ENCODE measurements at regions of chr7 and their contacts with region 1.

Region 1: GRCh38 chr7:134547397-134548054 is 1.4 kb upstream of the AKR1B15 start:
- DNase-seq: peak; percentile 83
- H3K4me3 Mint-ChIP-seq: peak overlapping the region; percentile 68
- H3K27ac Mint-ChIP-seq: peak overlapping the region; percentile 68
- H3K4me1 Mint-ChIP-seq: peaks cover 26% of the 10 kb centered on the region
- H3K27me3 Mint-ChIP-seq: no peaks in the 10 kb centered on the region
- CTCF ChIP-seq: peak; percentile 74

Region 2: DNA sequence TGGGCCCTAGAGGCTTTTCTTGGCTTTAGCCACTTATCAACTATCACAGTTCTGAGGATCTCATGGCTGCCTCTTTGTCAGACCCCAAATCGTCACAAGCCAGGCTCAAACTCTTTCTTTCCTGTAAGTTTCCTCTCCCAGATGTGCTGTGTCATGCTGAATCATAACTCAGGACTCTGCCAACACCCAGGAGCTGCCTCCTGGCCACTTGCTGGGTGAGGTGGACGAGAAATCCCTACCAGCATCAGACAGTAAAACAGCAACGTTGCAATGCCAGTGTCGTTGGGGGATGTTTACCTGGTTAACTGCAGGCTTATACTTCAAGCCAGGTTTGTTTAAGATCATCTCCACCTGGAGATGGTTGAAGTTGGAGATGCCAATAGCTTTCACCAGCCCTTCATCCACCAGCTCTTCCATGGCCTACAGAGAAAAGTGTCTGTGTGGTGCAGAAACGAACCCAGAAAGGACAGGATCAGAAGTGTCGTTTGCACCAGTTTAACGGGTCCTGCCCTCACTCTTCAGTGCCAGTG is 98.8 kb before region 1 on chr7:
- CTCF ChIA-PET with region 1: interaction called, 12 read pairs
- POLR2A ChIA-PET with region 1: no interaction called
- intact Hi-C with region 1: no loop called
- DNase-seq: peak; percentile 83
- H3K4me3 Mint-ChIP-seq: no peak overlapping the region
- H3K27ac Mint-ChIP-seq: peak overlapping the region; percentile 89
- H3K4me1 Mint-ChIP-seq: peaks cover 25% of the 10 kb centered on the region
- H3K27me3 Mint-ChIP-seq: no peaks in the 10 kb centered on the region
- CTCF ChIP-seq: no peak

Region 3: GRCh38 chr7:134520130-134520529 is 27.4 kb before region 1 on chr7:
- CTCF ChIA-PET with region 1: interaction called, 71 read pairs
- POLR2A ChIA-PET with region 1: interaction called, 17 read pairs
- intact Hi-C with region 1: loop called (anchors 1 kb)
- DNase-seq: peak; percentile 23
- H3K4me3 Mint-ChIP-seq: no peak overlapping the region
- H3K27ac Mint-ChIP-seq: no peak overlapping the region
- H3K4me1 Mint-ChIP-seq: peaks cover 26% of the 10 kb centered on the region
- H3K27me3 Mint-ChIP-seq: no peaks in the 10 kb centered on the region
- CTCF ChIP-seq: no peak

Region 4: DNA sequence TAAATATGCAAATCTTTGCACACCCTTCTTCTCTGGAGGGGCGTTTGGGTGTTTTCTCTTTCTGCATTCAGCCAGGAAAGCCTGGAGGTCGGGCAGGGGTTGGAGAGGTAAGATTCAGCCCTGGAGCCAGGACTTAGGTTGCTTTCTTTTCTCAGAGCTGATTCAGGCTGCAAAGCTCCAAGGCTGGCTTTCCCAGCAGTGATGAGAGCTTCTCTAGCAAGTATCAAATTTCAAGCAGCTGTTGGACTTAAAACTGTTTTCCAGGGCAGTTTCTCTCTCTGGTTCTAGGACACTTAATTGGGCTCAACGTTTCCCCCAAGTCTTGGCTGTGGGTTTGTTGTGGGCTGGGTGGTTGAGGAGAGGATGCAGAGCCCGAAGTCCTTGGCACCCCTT is 19.6 kb before region 1 on chr7:
- CTCF ChIA-PET with region 1: interaction called, 52 read pairs
- POLR2A ChIA-PET with region 1: interaction called, 24 read pairs
- intact Hi-C with region 1: no loop called
- DNase-seq: peak; percentile 66
- H3K4me3 Mint-ChIP-seq: no peak overlapping the region
- H3K27ac Mint-ChIP-seq: no peak overlapping the region
- H3K4me1 Mint-ChIP-seq: peaks cover 39% of the 10 kb centered on the region
- H3K27me3 Mint-ChIP-seq: no peaks in the 10 kb centered on the region
- CTCF ChIP-seq: no peak

Region 5: GRCh38 chr7:134533288-134533771 is 14.2 kb before region 1 on chr7:
- CTCF ChIA-PET with region 1: interaction called, 52 read pairs
- POLR2A ChIA-PET with region 1: interaction called, 24 read pairs
- intact Hi-C with region 1: no loop called
- DNase-seq: peak; percentile 54
- H3K4me3 Mint-ChIP-seq: peak overlapping the region; percentile 40
- H3K27ac Mint-ChIP-seq: peak overlapping the region; percentile 92
- H3K4me1 Mint-ChIP-seq: peaks cover 37% of the 10 kb centered on the region
- H3K27me3 Mint-ChIP-seq: no peaks in the 10 kb centered on the region
- CTCF ChIP-seq: no peak

Region 6: GRCh38 chr7:134605973-134606923 is 58.7 kb after region 1 on chr7:
- CTCF ChIA-PET with region 1: interaction called, 45 read pairs
- POLR2A ChIA-PET with region 1: interaction called, 4 read pairs
- intact Hi-C with region 1: loop called (anchors 1 kb)
- DNase-seq: peak; percentile 73
- H3K4me3 Mint-ChIP-seq: peak overlapping the region; percentile 21
- H3K27ac Mint-ChIP-seq: peak overlapping the region; percentile 65
- H3K4me1 Mint-ChIP-seq: peaks cover 6% of the 10 kb centered on the region
- H3K27me3 Mint-ChIP-seq: no peaks in the 10 kb centered on the region
- CTCF ChIP-seq: peak; percentile 90

Region 7: DNA sequence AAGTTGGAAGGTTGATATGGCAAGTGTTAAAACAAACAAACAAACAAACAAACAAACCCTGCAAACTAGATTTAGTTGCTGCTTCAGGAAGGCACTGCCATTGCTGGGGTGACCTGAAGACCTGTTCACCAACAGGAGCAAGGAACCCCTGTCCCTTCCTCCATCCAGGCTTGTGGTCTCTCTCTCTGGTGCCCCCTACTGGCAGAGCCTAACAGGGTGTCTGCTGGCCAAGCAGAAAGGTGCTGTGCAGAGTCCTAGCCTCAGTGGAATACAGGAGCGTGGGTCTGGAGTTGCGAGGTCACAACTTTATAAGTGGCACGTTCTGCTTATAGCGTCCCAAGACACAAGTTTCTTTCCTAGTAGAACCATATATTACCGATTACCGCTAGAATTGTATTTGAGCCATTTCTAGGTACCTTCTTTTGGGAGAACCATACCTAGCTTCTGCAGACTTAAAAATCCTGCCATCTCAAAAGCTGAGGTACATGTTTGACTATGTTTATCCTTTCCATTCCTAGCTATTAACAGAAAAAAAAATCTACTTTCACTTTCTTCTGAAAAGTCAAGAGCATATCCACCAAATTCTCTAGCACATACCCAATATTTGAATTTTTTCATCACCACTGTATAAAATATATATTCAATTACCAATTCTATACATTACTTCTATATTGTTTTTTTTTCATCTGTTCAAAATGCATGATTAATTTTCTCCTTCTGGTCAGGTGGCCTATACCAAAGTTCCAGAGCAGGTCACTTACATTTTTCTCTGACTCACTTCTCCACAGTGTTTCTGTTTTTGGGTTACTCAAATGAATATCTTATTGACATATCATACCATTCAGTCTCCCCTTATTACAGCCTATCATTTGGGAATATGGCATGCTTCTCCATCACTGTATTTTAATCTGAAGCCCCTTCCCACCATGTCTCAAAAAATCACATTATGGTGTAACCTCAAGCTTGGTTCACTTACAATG is 202.8 kb after region 1 on chr7:
- CTCF ChIA-PET with region 1: no interaction called
- POLR2A ChIA-PET with region 1: no interaction called
- intact Hi-C with region 1: no loop called
- DNase-seq: peak; percentile 58
- H3K4me3 Mint-ChIP-seq: no peak overlapping the region
- H3K27ac Mint-ChIP-seq: no peak overlapping the region
- H3K4me1 Mint-ChIP-seq: peaks cover 9% of the 10 kb centered on the region
- H3K27me3 Mint-ChIP-seq: no peaks in the 10 kb centered on the region
- CTCF ChIP-seq: peak; percentile 64